ENCODE measurements at regions of chr15 and their contacts with region 1.

Region 1: DNA sequence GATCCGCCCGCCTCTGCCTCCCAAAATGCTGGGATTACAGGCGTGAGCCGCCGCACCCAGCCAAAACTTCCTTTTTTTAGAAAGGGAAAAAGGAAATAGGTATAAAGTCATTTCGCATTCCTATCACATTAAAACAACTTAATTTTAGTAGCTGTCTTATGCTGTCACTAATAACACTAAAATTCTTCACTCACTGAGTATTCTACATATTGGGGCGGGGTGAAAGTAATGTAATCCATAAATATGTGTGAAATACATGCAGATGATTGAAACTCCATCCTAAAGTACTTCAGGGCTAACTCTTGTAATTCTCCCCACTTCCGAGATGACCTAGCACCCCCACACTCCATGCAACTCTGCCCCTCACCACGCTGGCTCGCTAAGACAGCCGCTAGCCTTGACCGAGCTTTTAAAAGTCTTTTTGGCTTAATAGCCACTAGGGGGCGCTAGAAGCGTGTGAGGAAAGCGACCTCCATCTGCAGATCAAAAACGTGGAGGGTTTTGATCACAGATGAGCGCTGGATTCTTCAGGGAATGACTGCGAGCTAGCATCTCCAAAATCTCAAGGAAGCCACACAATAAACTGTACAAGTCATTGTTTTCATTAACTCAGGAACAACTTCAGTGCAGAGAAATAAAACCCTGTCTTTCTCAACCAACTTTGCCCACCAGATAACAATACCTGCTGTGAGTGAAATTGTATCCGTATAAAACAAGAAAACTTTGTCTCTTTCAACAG is 129.3 kb upstream of the IGF1R start:
- DNase-seq: peak; percentile 80
- H3K4me3 Mint-ChIP-seq: no peak overlapping the region
- H3K27ac Mint-ChIP-seq: no peak overlapping the region
- H3K4me1 Mint-ChIP-seq: peaks cover 4% of the 10 kb centered on the region
- H3K27me3 Mint-ChIP-seq: no peaks in the 10 kb centered on the region
- CTCF ChIP-seq: peak; percentile 53

Region 2: DNA sequence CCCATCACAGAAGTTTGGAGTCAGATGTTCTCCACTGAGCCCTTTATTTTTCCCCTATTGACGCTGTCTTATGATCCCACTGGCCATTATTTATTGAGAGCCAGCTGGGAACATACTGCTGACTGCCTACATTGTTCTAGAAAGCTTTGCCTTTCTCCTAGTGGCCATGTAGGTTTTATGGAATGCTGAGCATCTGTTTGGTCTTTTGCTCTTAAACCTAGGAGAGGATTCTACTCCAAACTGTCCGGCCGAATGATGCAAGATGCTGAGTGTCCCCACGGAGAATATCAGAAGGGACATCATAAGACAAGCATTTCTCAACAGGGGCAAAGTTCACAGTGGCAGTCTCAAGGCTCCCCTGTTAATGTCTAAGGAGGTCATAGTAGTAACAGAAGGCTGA is 387.1 kb before region 1 on chr15:
- CTCF ChIA-PET with region 1: no interaction called
- POLR2A ChIA-PET with region 1: no interaction called
- intact Hi-C with region 1: no loop called
- DNase-seq: no peak
- H3K4me3 Mint-ChIP-seq: no peak overlapping the region
- H3K27ac Mint-ChIP-seq: no peak overlapping the region
- H3K4me1 Mint-ChIP-seq: peaks cover under 1% of the 10 kb centered on the region
- H3K27me3 Mint-ChIP-seq: no peaks in the 10 kb centered on the region
- CTCF ChIP-seq: no peak

Region 3: DNA sequence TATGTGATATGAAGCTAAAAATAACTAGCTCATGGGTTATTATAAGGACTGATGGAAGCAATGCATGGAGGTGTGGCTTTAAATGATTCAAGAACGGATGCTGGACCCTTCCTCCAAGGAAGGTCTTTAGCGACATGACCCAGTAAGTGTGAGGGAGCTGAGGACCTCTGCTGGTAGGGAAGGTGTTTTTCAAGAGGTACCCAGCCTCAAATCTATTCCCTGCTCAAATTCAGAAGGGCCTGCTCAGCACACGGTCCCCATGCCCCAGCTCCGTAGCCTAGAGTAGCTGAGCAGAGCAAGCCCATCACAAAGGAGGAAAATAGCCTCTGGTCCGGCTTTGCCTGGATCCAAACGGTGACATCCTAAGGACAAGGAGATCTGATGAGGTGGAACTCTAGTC is 136.9 kb before region 1 on chr15:
- CTCF ChIA-PET with region 1: no interaction called
- POLR2A ChIA-PET with region 1: no interaction called
- intact Hi-C with region 1: no loop called
- DNase-seq: no peak
- H3K4me3 Mint-ChIP-seq: no peak overlapping the region
- H3K27ac Mint-ChIP-seq: no peak overlapping the region
- H3K4me1 Mint-ChIP-seq: no peaks in the 10 kb centered on the region
- H3K27me3 Mint-ChIP-seq: peaks cover 12% of the 10 kb centered on the region
- CTCF ChIP-seq: no peak

Region 4: DNA sequence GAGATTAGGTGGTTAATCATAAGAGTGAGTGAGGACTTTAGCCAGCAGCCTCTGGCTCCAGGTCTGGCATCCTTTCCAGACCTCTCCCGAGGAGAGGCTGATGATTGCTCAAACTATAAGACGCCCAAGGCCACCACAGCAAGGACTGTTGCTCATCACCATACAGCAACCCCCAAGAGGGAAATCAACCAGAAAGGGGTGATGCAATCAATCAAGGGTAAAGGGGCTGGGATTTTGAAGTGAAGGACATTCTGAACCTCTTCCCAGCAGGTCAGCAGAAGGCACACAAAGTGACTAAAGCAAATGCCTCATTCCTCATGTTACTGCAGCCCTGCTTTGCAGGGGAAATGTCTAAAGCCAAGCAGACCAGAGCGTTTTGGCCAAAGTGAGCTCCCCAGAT is 118.0 kb before region 1 on chr15:
- CTCF ChIA-PET with region 1: no interaction called
- POLR2A ChIA-PET with region 1: no interaction called
- intact Hi-C with region 1: no loop called
- DNase-seq: no peak
- H3K4me3 Mint-ChIP-seq: no peak overlapping the region
- H3K27ac Mint-ChIP-seq: no peak overlapping the region
- H3K4me1 Mint-ChIP-seq: no peaks in the 10 kb centered on the region
- H3K27me3 Mint-ChIP-seq: peaks cover 32% of the 10 kb centered on the region
- CTCF ChIP-seq: no peak

Region 5: GRCh38 chr15:98530570-98530969 is 11.6 kb after region 1 on chr15:
- CTCF ChIA-PET with region 1: interaction called, 12 read pairs
- POLR2A ChIA-PET with region 1: no interaction called
- intact Hi-C with region 1: no loop called
- DNase-seq: no peak
- H3K4me3 Mint-ChIP-seq: no peak overlapping the region
- H3K27ac Mint-ChIP-seq: no peak overlapping the region
- H3K4me1 Mint-ChIP-seq: no peaks in the 10 kb centered on the region
- H3K27me3 Mint-ChIP-seq: peaks cover 67% of the 10 kb centered on the region
- CTCF ChIP-seq: no peak

Region 6: DNA sequence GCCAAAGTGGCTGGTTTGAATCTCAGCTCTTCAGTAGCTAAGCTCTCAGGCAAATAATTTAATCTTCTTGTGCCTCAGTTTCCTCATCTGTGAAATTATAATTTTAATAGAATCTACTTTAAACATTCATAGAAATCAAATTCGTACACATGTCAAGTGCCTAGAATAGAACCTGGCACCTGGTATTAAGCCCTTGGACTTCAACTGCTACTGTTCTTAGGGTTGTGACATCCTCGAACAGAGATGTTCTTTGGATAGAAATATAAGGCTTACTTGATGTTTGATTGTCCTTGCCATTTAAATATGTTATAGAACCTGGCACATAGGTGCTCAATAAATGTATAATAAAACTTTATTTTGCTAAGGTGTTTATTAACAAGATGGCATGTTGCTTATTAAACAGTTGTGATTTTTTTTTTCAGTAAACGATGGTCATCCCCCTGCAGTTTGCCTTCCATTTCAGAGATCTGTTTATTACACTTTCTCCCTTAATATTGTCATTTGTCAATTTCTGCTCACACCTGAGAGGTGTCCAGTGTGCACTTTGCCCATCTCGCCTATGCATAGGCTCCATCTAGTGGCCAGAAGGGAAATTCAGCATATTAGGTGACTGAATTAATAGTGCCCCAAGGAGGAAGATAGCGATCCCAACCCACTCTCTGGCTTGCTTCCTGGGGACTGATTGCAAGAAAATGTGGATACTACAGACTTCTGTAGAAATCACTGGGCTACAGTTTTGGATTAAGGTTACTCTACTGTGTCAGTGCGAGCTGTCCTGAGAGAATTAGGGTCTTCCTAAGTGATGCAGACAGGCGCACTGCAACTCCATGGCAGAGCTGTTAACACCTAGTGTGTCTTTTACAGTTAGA is 140.1 kb after region 1 on chr15:
- CTCF ChIA-PET with region 1: interaction called, 58 read pairs
- POLR2A ChIA-PET with region 1: interaction called, 6 read pairs
- intact Hi-C with region 1: loop called (anchors 1 kb)
- DNase-seq: peak; percentile 76
- H3K4me3 Mint-ChIP-seq: no peak overlapping the region
- H3K27ac Mint-ChIP-seq: peak overlapping the region; percentile 3
- H3K4me1 Mint-ChIP-seq: peaks cover 44% of the 10 kb centered on the region
- H3K27me3 Mint-ChIP-seq: no peaks in the 10 kb centered on the region
- CTCF ChIP-seq: peak; percentile 69

Region 7: DNA sequence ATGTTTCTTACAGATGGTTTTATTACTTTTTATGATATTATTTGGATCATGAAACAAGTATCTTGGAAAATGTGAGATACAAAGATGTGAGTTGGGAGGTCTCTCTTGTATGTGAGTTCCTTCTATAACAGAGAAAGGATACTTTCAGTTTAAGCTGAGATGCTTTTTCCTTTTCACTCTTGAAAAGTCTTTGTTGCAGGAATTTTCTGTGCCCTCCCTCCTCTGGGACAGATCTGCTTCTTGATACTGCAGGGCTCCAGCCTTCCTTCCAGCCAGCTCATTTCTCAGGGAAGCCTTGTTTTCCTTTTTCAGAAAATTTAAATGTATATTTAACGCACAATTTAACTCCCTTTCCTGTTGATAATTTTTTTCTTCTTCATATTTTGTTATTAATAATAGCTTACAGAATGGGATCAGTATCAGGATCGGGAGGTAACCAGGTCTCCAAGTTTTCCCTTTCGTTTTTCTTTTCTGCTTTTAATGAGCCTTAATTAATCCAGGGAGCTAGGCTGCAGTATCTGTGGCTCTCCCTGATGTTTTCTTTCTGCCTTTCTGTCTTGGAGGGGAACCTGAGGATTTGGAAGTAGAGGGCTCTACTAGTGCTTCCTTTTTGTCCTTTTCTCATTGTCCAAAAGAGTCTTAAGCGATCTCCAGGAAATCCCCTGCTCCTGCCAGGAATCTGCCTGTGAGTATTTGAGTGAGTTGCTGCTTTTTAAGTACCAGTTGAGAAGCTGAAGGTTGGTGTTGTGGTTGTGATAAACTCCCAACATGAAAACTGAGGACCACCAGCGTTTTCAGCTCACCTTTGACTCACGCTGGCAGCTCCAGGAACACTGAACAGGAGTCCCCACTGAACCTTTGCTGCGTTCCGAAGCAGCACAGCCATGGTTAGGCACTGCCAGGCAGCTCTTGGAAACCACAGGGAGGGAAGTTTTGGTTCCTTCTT is 235.0 kb after region 1 on chr15:
- CTCF ChIA-PET with region 1: no interaction called
- POLR2A ChIA-PET with region 1: no interaction called
- intact Hi-C with region 1: no loop called
- DNase-seq: peak; percentile 36
- H3K4me3 Mint-ChIP-seq: peak overlapping the region; percentile 79
- H3K27ac Mint-ChIP-seq: peak overlapping the region; percentile 91
- H3K4me1 Mint-ChIP-seq: no peaks in the 10 kb centered on the region
- H3K27me3 Mint-ChIP-seq: no peaks in the 10 kb centered on the region
- CTCF ChIP-seq: no peak

Region 8: DNA sequence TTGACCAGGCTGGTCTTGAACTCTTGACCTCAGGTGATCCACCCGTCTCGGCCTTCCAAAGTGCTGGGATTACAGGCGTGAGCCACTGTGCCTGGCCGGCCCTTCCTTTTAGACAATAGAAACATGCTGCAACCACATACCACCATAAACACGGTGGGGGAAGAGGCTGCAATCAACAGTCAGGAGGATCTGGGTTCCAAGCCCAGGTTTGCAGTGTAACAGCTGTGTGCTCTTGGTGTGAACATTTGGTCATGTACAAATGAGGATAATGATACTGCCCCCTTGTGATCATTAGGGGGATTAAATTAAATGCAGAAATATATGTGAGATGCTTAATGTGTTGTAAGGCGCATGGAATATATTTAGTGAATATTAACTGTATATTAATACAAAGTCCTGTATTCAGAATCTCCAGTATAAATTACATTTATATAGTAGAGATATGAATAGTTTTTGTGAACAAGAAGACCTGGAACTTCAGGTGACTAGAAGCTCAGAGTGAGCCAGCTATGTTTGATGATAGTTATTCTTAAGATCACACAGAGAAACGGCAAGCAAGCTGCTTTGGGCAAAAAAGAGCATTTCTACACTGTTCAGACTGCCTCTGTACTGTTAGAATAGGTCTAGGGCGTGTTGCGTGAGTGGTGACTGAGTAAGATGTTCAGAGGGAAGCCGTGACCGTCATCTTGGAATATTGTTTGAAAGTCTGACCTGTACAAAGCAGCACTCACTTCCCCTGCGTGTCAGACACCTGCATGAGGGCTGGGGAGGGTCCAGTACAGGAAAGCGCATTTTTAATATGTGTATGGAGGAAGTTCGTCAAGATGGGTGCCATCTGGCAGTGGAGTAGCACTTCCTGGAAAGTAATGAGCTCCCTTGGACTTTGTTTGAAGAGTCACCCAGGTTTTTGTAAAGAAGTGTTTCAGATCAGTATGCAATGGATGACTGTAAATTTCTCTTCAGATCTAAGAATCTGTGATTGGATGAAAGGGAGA is 362.8 kb after region 1 on chr15:
- CTCF ChIA-PET with region 1: interaction called, 26 read pairs
- POLR2A ChIA-PET with region 1: interaction called, 4 read pairs
- intact Hi-C with region 1: loop called (anchors 1 kb)
- DNase-seq: peak; percentile 75
- H3K4me3 Mint-ChIP-seq: no peak overlapping the region
- H3K27ac Mint-ChIP-seq: peak overlapping the region; percentile 59
- H3K4me1 Mint-ChIP-seq: peaks cover 20% of the 10 kb centered on the region
- H3K27me3 Mint-ChIP-seq: no peaks in the 10 kb centered on the region
- CTCF ChIP-seq: peak; percentile 53

Region 9: DNA sequence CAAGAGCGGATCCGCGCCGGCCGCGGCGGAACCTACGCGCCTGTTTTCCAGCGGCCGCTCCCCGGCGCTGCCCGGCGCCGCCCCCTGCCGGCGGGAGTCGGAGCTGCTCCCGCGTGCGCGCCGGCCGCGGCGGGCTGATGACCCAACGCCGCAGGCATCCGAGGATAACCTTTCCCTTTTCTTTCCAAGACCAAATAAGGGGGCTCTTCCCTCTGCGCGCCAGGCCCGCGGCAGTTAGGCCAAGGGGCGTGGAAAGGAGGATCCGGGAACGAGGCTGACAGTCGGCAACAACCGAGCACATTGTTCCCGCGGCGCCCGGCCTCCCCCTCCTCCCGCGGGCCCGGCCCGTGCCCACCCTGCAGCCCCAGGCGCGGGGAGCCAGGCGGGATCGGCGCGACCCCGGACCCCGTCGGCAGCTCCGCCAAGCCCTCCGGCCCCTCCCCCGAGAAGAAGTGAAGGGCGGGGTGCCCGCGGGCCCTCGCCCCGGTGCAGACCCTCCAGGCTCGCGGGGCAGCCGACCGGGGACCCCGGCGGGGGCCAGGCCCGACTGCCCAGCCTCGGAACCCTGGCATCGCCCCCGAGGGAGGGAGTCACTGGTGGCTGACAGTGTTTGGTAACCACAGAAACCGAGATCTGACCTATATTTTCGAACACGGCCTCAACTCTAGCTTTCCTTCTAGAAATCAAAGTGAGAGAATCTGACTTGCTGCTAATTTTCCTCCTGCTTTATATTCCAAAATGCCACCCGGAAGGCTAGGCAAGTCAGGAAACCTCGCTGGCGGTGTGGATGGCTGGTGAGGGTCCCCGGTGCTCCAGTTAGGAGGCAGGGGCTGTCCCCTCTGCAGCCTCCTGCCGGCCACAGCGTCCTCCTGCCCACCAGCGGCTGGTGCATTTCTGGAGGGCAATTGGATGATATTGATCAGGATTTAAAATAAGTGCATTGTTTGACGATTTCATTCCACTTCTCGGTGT is 540.3 kb after region 1 on chr15:
- CTCF ChIA-PET with region 1: interaction called, 6 read pairs
- POLR2A ChIA-PET with region 1: interaction called, 3 read pairs
- intact Hi-C with region 1: loop called (anchors 1 kb)
- DNase-seq: peak; percentile 50
- H3K4me3 Mint-ChIP-seq: peak overlapping the region; percentile 63
- H3K27ac Mint-ChIP-seq: no peak overlapping the region
- H3K4me1 Mint-ChIP-seq: no peaks in the 10 kb centered on the region
- H3K27me3 Mint-ChIP-seq: peaks cover 30% of the 10 kb centered on the region
- CTCF ChIP-seq: peak; percentile 81

Region 10: DNA sequence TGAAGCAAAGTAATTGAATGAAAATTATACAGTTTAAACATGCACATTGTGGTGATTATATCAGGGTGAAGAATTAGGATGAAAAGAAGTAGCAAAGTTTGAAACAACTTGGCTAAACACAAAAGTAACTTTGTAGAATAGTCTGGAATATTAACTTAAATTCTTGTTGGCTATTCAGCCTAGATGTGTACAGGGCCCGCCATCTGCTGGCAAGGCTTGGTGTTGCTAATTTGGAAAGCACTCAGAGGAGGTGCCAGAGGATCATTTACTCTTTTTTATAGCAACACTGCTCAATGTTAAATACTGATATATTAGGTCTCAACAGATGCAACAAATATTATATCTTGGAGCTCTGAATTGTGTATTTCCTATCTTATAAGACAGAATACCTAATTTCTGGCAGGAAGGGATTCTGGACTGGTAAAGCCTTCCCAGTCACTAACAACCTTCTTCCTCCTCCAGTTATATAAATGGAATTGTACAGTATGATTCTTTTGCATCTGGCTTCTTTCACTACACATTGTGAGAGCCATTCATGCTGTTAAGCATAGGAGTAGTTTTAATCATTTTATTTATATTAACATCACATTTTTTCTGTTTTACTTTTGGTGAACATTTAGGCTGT is 694.3 kb after region 1 on chr15:
- CTCF ChIA-PET with region 1: interaction called, 3 read pairs
- POLR2A ChIA-PET with region 1: no interaction called
- intact Hi-C with region 1: loop called (anchors 1 kb)
- DNase-seq: peak; percentile 64
- H3K4me3 Mint-ChIP-seq: no peak overlapping the region
- H3K27ac Mint-ChIP-seq: no peak overlapping the region
- H3K4me1 Mint-ChIP-seq: peaks cover 6% of the 10 kb centered on the region
- H3K27me3 Mint-ChIP-seq: no peaks in the 10 kb centered on the region
- CTCF ChIP-seq: peak; percentile 85